ENCODE measurements at regions of chr5 and their contacts with region 1.

Region 1: GRCh38 chr5:107874795-107875194 is 204.1 kb upstream of the EFNA5 start:
- DNase-seq: no peak
- H3K4me3 ChIP-seq: no peak overlapping the region
- H3K27me3 ChIP-seq: no peaks in the 10 kb centered on the region
- CTCF ChIP-seq: no peak

Region 2: DNA sequence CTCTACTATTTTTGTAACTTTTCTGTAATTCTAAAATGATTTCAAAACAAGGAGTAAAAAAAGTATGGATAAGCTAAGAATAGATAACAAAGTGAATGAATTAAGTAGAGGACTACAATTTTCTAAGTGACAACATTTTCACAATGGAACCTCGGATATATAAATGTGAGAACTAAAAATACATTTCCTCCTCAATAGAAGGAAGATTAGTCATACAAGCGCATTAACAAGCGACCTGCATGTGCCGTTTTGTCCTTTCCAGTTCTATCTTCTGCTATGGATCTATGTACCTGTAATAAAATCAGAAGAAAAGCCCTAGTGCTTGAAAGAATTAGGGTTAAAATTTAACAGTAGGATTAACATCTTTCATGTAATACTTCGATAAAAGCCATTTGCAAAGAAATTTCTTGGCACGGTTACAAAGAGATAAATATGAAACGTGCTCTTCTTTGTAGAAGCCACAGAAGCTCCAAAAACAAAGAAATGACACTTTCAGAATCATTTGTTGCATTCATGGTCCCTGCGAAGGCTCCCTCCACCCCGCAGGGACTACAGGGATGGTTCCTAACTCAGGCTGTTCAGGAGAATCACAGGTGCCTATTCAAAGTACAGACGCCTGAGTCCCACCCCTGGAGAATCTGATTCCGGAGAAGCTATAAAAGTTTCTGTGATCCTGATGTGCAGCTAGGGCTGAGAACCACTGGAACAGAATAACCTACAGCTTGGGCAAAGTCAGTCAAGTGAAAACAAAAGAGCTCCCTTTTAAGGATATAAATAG is 12.6 kb after region 1 on chr5:
- CTCF ChIA-PET with region 1: interaction called, 4 read pairs
- POLR2A ChIA-PET with region 1: interaction called, 10 read pairs
- DNase-seq: no peak
- H3K4me3 ChIP-seq: no peak overlapping the region
- H3K27me3 ChIP-seq: no peaks in the 10 kb centered on the region
- CTCF ChIP-seq: no peak